ENCODE measurements at regions of chr7 and their contacts with region 1.

Region 1: GRCh38 chr7:155644178-155644970 is at the start of gene RBM33:
- DNase-seq: peak; percentile 78
- H3K4me3 Mint-ChIP-seq: peak within 1 kb of the TSS; percentile 87
- H3K27ac Mint-ChIP-seq: peak within 1 kb of the TSS; percentile 95
- H3K4me1 Mint-ChIP-seq: peaks cover 41% of the 10 kb centered on the region
- H3K27me3 Mint-ChIP-seq: no peaks in the 10 kb centered on the region
- total RNA-seq, gene RBM33: 65.5 to 66.3 TPM

Region 2: GRCh38 chr7:155003376-155004214 is 640.8 kb before region 1 on chr7:
- CTCF ChIA-PET with region 1: no interaction called
- intact Hi-C with region 1: loop called (anchors 10 kb)
- DNase-seq: peak; percentile 75
- H3K4me3 Mint-ChIP-seq: peak overlapping the region; percentile 92
- H3K27ac Mint-ChIP-seq: peak overlapping the region; percentile 89
- H3K4me1 Mint-ChIP-seq: peaks cover 7% of the 10 kb centered on the region
- H3K27me3 Mint-ChIP-seq: no peaks in the 10 kb centered on the region

Region 3: GRCh38 chr7:155298834-155299534 is 345.4 kb before region 1 on chr7:
- CTCF ChIA-PET with region 1: no interaction called
- intact Hi-C with region 1: loop called (anchors 2 kb)
- DNase-seq: peak; percentile 98
- H3K4me3 Mint-ChIP-seq: peak overlapping the region; percentile 88
- H3K27ac Mint-ChIP-seq: peak overlapping the region; percentile 92
- H3K4me1 Mint-ChIP-seq: peaks cover 30% of the 10 kb centered on the region
- H3K27me3 Mint-ChIP-seq: no peaks in the 10 kb centered on the region

Region 4: DNA sequence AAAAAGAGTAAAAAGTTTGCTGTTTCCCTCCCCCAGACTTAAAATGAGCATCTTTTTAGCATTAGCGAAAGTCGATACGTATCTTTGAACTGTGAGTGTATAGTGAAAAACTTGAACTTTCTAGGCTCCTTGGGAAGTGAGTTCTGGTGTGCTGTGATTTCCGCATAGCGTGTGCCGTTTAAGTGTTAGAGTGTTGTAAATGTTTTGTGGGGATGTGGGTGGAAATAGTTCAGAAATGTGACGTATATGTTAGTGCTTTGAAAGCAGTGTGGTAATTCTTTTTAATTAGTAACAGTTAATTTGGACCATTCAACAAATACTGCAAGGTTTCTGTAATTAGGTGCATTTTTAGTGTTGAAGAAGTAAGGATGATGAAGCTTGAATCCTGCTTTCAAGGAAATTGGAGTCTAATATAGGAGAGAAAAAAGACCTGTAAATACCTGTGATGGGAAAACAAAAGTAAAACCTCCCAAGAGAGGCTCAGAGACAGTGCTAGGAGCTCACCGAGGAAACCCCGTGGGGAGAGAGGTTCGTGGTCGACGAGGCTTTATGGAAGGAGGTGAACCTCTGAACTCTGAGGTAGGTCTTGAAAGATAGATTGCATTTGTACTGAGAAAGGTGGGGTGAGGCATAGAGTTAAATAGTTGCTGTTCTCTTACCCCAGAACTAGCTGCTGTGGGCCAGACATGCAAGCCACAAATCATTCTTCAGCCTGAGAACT is 40.9 kb after region 1 on chr7:
- CTCF ChIA-PET with region 1: no interaction called
- intact Hi-C with region 1: loop called (anchors 5 kb)
- DNase-seq: no peak
- H3K4me3 Mint-ChIP-seq: peak overlapping the region; percentile 1
- H3K27ac Mint-ChIP-seq: peak overlapping the region; percentile 1
- H3K4me1 Mint-ChIP-seq: peaks cover 80% of the 10 kb centered on the region
- H3K27me3 Mint-ChIP-seq: no peaks in the 10 kb centered on the region

Region 5: DNA sequence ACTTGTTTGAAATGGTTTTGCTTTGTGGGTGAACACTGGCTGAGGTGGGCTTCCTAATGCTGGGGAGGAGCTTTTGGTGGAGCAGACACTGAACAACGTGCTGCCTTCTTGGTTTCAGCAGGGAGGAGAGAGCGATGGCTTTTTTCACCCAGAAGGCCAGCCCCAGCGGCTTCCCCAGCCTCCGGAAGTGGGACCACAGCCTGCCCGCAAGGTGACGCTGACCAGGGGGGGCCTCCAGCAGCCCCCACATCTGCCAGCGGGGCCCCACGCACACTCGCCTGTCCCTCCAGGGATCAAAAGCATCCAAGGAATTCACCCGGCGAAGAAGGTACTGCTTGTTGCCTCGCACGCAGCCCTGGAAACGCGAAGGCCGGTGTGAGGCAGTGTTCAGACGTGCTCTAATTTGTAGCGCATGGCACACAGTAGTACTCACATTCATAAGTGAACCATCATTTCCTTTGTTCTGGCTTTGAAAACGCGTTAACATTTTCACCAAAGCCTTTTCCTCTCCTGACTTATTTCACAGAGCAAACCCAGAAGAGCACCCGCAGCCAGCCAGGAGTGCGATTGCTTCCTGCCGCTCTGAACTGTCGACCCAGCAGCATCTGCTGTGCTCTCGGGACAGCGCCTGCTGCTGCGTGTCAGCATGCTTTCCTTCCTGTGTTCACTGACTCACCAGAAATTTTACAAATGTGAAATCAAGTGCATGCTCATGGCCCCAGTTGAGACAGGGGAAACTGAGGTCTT is 119.5 kb after region 1 on chr7:
- CTCF ChIA-PET with region 1: interaction called, 4 read pairs
- intact Hi-C with region 1: loop called (anchors 1 kb)
- DNase-seq: peak; percentile 82
- H3K4me3 Mint-ChIP-seq: peak overlapping the region; percentile 70
- H3K27ac Mint-ChIP-seq: peak overlapping the region; percentile 95
- H3K4me1 Mint-ChIP-seq: peaks cover 42% of the 10 kb centered on the region
- H3K27me3 Mint-ChIP-seq: no peaks in the 10 kb centered on the region

Region 6: DNA sequence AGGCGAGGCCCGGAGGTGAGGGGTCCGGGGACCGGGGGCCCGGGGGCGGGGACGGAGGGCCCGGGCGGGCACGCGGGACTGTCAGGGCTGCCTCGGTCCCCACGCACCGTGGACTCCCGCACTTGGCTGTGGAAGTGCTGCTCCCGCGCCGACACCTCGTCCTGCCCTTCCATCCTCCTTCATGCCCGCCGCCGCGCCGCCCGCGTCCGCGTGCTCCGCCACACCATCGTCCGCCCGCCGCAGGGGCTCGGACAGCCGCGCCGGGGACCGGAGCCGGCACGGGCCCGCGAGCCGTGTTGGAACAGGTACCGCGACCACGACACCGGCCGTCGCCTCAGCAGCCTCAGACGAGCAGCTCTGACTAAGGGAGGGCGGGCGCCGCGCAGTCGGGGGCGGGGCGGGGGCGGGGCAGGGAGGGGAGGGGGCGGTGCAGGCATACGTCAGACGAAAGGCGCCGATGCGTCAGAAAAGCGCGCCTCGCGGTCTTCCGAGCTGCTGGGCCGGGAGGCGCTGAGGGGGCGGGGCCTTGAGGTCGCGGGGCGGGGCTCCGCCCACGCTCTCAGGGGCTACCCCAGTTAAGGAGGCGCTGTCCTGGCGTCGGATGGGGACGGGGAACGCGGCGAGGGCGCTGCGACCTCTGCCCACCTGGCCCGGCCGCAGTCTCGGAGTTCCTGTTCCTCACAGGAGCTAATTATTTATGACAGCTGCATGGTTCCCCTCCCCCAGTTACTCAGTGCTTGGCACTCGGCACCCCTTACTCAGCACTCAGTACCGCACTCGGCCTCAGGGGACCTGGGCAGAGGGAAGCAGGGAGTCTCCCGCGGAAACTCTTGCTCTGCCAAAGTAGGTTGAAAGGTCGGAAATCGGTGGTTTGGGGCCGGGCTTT is 1248.7 kb after region 1 on chr7 and contains the start of gene LMBR1:
- CTCF ChIA-PET with region 1: no interaction called
- intact Hi-C with region 1: loop called (anchors 5 kb)
- DNase-seq: peak; percentile 93
- H3K4me3 Mint-ChIP-seq: peak within 1 kb of the TSS; percentile 89
- H3K27ac Mint-ChIP-seq: peak within 1 kb of the TSS; percentile 92
- H3K4me1 Mint-ChIP-seq: peaks cover 34% of the 10 kb centered on the region
- H3K27me3 Mint-ChIP-seq: no peaks in the 10 kb centered on the region
- total RNA-seq, gene LMBR1: 25.2 to 33.8 TPM